Mammary epithelial cell (primary cell): ENCODE measurements at regions of chr11 and their contacts with region 1.

Region 1: DNA sequence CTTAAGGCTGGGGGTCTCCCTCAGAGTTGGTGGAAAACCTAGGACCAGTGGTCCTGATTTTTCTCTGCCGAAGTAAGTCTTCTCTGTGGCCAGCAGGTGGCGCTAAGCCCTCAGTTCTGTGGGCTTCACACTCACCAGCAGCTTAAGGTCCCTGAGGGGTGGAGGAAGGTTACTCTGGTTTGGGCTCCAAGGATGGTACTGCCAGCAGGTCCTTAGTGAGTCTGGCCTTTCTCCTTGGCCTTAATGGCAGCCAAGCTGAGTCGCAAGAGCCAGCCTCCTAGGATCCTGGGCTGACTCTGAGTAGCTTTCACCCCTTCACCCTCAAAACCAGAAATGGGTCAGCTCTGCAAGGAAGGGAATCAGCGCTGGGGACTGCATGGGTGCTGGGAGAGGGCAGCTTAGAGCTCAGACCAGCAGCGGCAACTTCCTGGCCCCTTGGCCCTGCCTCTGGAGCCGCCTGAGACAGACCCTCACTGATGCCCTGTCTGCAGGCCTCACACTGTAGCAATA is 4.4 kb downstream of the KCNJ11 start:
- DNase-seq: peak; percentile 47
- H3K4me3 ChIP-seq: no peak overlapping the region
- H3K27ac ChIP-seq: no peak overlapping the region
- H3K4me1 ChIP-seq: peaks cover 5% of the 10 kb centered on the region
- H3K27me3 ChIP-seq: no peaks in the 10 kb centered on the region
- CTCF ChIP-seq: peak; percentile 73 to 88

Region 2: DNA sequence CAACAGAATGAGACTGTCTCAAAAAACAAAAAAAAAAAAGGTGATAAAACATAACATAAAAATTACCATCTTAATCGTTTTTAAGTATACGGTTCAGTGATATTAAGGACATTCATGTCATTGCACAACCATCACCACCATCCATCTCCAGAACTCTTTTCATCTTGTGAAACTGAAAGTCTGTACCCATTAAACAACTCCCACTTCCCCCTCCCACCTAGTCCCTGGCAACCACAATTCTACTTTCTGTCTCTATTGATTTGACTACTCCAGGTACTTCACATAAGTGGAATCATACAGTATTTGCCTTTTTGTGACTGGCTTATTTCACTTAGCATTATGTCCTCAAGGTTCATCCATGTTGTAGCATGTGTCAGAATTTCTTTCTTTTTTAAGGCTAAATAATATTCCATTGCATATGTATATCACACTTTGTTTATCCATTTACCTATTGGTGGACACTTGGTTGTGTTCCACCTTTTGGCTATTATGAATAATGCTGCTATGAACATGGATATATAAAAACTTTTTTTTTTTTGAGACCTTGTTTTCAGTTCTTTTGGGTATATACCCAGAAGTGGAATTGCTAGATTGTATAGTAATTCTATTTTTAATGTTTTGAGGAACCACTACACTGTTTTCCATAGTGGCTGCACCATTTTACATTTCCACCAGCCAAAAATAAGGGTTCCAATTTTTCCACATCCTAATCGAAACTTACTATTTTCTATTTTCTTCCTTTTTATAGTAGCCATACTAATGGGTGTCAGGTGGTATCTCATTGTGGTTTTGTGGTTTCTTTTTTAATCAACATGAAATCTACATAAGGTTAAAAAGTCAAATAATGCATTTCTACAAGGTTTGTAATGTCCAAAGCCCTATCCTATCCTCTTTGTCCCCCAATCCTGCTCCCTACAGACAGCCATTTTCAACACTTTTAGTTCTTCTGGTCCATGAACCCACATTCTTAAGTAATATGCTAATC is 152.9 kb before region 1 on chr11:
- CTCF ChIA-PET with region 1: no interaction called
- dilution Hi-C with region 1: no loop called
- in situ Hi-C with region 1: no loop called
- intact Hi-C with region 1: loop called (anchors 1 kb)
- DNase-seq: no peak
- H3K4me3 ChIP-seq: no peak overlapping the region
- H3K27ac ChIP-seq: no peak overlapping the region
- H3K4me1 ChIP-seq: no peaks in the 10 kb centered on the region
- H3K27me3 ChIP-seq: no peaks in the 10 kb centered on the region
- CTCF ChIP-seq: no peak

Region 3: DNA sequence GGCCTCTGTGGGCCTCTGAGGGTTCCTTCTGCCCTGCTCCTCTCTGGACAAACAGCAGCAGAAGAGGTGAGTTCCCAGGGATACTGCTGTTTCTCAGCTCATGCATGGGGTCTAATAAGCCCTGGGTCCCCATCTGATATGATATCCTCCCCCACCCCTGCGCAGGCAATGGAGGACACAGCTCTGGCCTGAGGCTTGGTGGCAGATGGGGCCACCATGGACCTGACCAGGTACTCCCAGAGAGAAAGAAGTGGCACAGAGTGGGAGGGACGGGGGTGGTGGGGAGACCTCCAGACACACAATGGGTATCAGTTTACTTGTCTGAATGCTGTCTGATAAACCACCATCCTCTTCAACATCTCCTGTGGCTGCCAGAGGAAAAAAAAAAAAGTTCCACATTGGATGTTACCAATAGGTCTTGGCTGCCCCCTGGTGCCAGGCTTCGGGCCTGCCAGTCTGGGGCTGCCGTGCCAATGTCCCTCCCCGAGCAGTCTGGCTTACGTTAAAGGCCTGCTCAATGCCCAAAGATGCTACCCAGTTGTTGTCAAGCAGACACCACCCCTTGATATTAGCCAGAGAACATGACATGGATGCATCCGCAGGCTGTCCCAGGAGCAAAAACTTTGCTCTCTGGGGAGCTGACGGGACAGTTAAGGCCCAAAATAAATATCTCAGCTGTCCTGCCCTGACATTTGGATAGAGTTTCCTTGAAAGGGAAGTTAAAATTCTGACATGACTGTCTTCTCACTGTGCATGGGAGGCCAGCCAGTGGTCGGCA is 120.5 kb after region 1 on chr11:
- CTCF ChIA-PET with region 1: no interaction called
- dilution Hi-C with region 1: no loop called
- in situ Hi-C with region 1: loop called in 1 of 2 experiments (anchors 10 kb)
- intact Hi-C with region 1: loop called (anchors 1 kb)
- DNase-seq: peak; percentile 48
- H3K4me3 ChIP-seq: no peak overlapping the region
- H3K27ac ChIP-seq: no peak overlapping the region
- H3K4me1 ChIP-seq: no peaks in the 10 kb centered on the region
- H3K27me3 ChIP-seq: no peaks in the 10 kb centered on the region
- CTCF ChIP-seq: peak; percentile 93 to 96

Region 4: GRCh38 chr11:17730608-17731462 is 346.8 kb after region 1 on chr11:
- CTCF ChIA-PET with region 1: interaction called, 3 read pairs
- dilution Hi-C with region 1: no loop called
- in situ Hi-C with region 1: no loop called
- intact Hi-C with region 1: loop called (anchors 10 kb)
- DNase-seq: peak; percentile 68
- H3K4me3 ChIP-seq: no peak overlapping the region
- H3K27ac ChIP-seq: no peak overlapping the region
- H3K4me1 ChIP-seq: peaks cover 9% of the 10 kb centered on the region
- H3K27me3 ChIP-seq: peaks cover 12% of the 10 kb centered on the region
- CTCF ChIP-seq: peak; percentile 82 to 96

Region 5: GRCh38 chr11:17954395-17955252 is 570.6 kb after region 1 on chr11:
- CTCF ChIA-PET with region 1: no interaction called
- dilution Hi-C with region 1: no loop called
- in situ Hi-C with region 1: no loop called
- intact Hi-C with region 1: no loop called
- DNase-seq: no peak
- H3K4me3 ChIP-seq: no peak overlapping the region
- H3K27ac ChIP-seq: no peak overlapping the region
- H3K4me1 ChIP-seq: no peaks in the 10 kb centered on the region
- H3K27me3 ChIP-seq: no peaks in the 10 kb centered on the region
- CTCF ChIP-seq: no peak